Activated CD4-positive, alpha-beta T cell treated with anti-CD3 and anti-CD28 coated beads for 36 hours (primary cell): ENCODE measurements at regions of chr19 and their contacts with region 1.

Region 1: GRCh38 chr19:50376166-50377050 is at the start of gene NR1H2:
- DNase-seq: peak; percentile 97
- ATAC-seq: peak; percentile 89
- H3K4me3 Mint-ChIP-seq: peak within 1 kb of the TSS; percentile 89
- H3K27ac Mint-ChIP-seq: peak within 1 kb of the TSS; percentile 97
- H3K4me1 Mint-ChIP-seq: peaks cover 21% of the 10 kb centered on the region
- H3K27me3 Mint-ChIP-seq: no peaks in the 10 kb centered on the region
- total RNA-seq, gene NR1H2: 50.3 to 53.6 TPM

Region 2: DNA sequence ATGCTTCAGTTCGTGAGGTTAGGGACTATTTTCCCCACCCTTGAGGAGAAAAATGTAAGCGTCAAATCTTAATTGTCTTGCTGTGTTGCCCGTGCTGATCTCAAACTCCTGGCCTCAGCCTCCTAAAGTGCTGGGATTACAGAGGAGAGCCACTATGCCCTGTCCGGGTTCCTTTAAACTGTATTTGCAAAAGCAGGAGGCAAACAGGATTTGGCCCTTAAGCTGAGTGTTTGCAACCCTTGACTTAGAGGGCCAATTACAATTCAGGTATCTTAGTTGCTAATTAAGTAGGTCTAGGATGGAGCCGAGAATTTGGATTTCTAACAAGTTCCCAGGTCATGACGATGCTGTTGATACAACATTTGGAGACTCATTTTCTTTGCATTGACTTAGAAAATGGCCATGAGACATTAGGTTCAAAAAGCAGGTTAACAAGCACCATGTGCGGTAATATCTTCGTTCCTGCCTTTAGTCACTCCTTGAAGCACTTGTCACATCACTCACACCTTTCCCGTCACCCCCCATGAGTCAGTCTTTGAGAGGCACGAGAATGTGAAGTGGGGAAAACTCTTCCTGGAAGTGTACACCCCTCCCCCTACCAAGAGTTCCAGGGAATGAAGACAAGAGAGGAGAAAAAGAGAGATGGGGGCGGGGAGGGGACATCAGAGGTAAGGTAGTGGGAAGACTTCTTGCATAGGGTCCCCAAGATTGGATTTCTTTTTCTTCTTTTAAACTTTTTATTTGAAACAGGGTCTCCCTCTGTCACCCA is 13.6 kb before region 1 on chr19:
- CTCF ChIA-PET with region 1: interaction called, 11 read pairs
- POLR2A ChIA-PET with region 1: interaction called, 5 read pairs
- intact Hi-C with region 1: loop called in 1 of 2 experiments (anchors 1 kb)
- DNase-seq: peak; percentile 76
- ATAC-seq: peak; percentile 50
- H3K4me3 Mint-ChIP-seq: peak overlapping the region; percentile 58
- H3K27ac Mint-ChIP-seq: peak overlapping the region; percentile 99
- H3K4me1 Mint-ChIP-seq: peaks cover 81% of the 10 kb centered on the region
- H3K27me3 Mint-ChIP-seq: no peaks in the 10 kb centered on the region

Region 3: DNA sequence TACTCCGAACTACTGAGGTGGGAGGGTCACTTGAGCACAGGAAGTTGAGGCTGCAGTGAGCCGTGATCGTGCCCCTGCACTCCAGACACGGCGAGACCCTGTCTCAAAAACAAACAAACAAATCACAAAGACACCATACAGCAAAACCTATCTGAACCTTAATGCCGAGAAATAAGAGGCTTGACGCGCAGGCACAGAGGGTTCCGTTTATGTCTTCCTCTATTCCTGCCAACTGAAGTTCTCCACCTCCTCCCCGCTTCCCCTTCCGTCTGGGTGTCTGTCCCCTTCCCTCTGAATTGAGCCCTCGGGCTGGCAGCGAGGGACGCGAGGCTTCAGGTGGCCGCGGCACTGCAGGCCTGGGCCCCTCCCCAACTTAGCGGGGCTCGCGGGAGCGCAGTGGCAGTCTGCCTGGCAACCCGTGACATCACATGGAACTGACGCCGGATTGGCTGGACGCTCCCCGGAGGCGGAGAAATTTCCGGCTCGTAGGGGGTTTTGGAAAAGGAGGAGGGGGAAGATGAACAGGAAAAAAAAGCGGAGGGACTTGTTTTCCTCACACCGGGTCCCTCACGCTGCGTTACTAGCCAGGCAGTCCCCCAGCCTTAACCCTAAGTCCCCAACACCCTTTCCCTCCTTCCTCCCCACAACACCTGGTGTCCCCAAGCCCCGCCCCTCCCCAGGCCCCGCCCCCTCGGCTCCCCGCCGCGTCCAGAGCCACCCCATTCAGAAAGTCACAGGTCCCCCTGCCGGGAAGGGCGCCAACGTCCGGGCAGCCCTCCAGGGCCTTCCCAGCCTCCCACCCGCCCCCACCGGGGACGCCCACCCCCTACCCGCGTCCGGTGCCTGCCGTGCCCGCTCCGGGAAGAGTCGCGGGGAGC is 55.2 kb after region 1 on chr19:
- CTCF ChIA-PET with region 1: no interaction called
- POLR2A ChIA-PET with region 1: no interaction called
- intact Hi-C with region 1: loop called in 1 of 2 experiments (anchors 1 kb)
- DNase-seq: peak; percentile 92
- ATAC-seq: peak; percentile 95
- H3K4me3 Mint-ChIP-seq: peak overlapping the region; percentile 72
- H3K27ac Mint-ChIP-seq: peak overlapping the region; percentile 93
- H3K4me1 Mint-ChIP-seq: peaks cover 15% of the 10 kb centered on the region
- H3K27me3 Mint-ChIP-seq: peaks cover 6% of the 10 kb centered on the region